ENCODE measurements at regions of chr3 and their contacts with region 1.

Region 1: DNA sequence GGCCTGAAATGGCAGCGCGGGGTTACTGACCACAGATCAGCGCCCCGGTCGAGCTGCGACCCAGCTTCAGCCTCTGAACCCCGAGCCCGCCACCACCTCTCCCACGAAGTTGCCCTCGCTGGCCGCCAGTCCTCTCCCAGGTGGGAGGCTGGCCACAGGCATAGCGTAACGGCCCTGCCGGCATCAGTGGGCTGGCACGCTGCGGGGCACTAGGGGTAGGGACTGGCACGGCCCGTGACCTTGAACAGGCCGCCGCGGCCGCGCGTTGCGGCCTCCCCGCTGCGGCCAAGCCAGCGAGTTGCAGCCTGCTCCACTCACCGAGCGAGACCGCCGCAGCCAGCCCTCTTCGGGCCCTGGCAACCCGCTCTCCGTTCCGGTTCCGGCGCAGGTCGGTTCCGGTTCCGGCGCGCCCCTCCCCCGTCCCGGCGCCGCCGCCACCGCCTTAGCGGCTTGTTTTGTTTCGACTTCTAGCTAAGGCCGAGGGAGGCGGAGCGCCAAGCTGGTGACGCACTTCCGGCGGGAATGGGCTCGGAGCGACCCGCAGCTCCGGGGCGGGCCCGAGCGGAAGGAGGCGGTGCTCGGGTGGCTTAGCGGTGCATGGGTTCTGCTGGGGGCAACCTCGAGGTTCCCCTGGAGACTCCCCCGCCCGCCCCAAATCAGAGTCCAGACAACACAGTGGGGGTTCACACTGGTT is at the start of gene USP19:
- DNase-seq: peak; percentile 81
- ATAC-seq: peak; percentile 95
- H3K4me3 ChIP-seq: peak within 1 kb of the TSS; percentile 77 to 83
- H3K27ac ChIP-seq: peak within 1 kb of the TSS; percentile 100
- H3K4me1 ChIP-seq: peaks cover 7 to 14% of the 10 kb centered on the region in 2 experiments
- H3K27me3 ChIP-seq: no peaks in the 10 kb centered on the region
- CTCF ChIP-seq: no peak
- POLR2A ChIP-seq: peak; percentile 60
- RAD21 ChIP-seq: no peak
- total RNA-seq, gene USP19: 92.8 TPM

Region 2: GRCh38 chr3:49133226-49133951 is 12.8 kb after region 1 on chr3:
- CTCF ChIA-PET with region 1: interaction called, 3 read pairs
- POLR2A ChIA-PET with region 1: interaction called, 10 read pairs
- RAD21 ChIA-PET with region 1: interaction called, 3 read pairs
- intact Hi-C with region 1: no loop called
- DNase-seq: peak; percentile 74
- ATAC-seq: peak; percentile 76
- H3K4me3 ChIP-seq: peak overlapping the region; percentile 70 to 91
- H3K27ac ChIP-seq: peak overlapping the region; percentile 89
- H3K4me1 ChIP-seq: peaks cover 16 to 46% of the 10 kb centered on the region in 2 experiments
- H3K27me3 ChIP-seq: no peaks in the 10 kb centered on the region
- CTCF ChIP-seq: no peak
- POLR2A ChIP-seq: no peak
- RAD21 ChIP-seq: no peak

Region 3: GRCh38 chr3:49370585-49371290 is 250.2 kb after region 1 on chr3:
- CTCF ChIA-PET with region 1: no interaction called
- POLR2A ChIA-PET with region 1: no interaction called
- RAD21 ChIA-PET with region 1: no interaction called
- intact Hi-C with region 1: no loop called
- DNase-seq: no peak
- ATAC-seq: no peak
- H3K4me3 ChIP-seq: no peak overlapping the region
- H3K27ac ChIP-seq: no peak overlapping the region
- H3K4me1 ChIP-seq: no peaks in the 10 kb centered on the region
- H3K27me3 ChIP-seq: no peaks in the 10 kb centered on the region
- CTCF ChIP-seq: no peak
- POLR2A ChIP-seq: no peak
- RAD21 ChIP-seq: no peak

Region 4: GRCh38 chr3:49512771-49513358 is 392.3 kb after region 1 on chr3:
- CTCF ChIA-PET with region 1: no interaction called
- POLR2A ChIA-PET with region 1: no interaction called
- RAD21 ChIA-PET with region 1: no interaction called
- intact Hi-C with region 1: no loop called
- DNase-seq: no peak
- ATAC-seq: no peak
- H3K4me3 ChIP-seq: no peak overlapping the region
- H3K27ac ChIP-seq: no peak overlapping the region
- H3K4me1 ChIP-seq: no peaks in the 10 kb centered on the region
- H3K27me3 ChIP-seq: no peaks in the 10 kb centered on the region
- CTCF ChIP-seq: no peak
- POLR2A ChIP-seq: no peak
- RAD21 ChIP-seq: no peak